ENCODE measurements at regions of chr7 and their contacts with region 1.

Region 1: GRCh38 chr7:100456558-100456957 is 7.5 kb downstream of the SPACDR start:
- DNase-seq: no peak
- H3K4me3 ChIP-seq: no peak overlapping the region
- H3K27ac ChIP-seq: no peak overlapping the region
- H3K4me1 ChIP-seq: peaks cover 4 to 24% (median 20%) of the 10 kb centered on the region in 4 experiments
- H3K27me3 ChIP-seq: no peaks in the 10 kb centered on the region

Region 2: GRCh38 chr7:100393233-100393905 is 63.2 kb before region 1 on chr7:
- CTCF ChIA-PET with region 1: no interaction called
- POLR2A ChIA-PET with region 1: no interaction called
- DNase-seq: no peak
- H3K4me3 ChIP-seq: no peak overlapping the region
- H3K27ac ChIP-seq: no peak overlapping the region
- H3K4me1 ChIP-seq: peaks cover 0 to 4% (median 0%) of the 10 kb centered on the region in 4 experiments
- H3K27me3 ChIP-seq: no peaks in the 10 kb centered on the region

Region 3: GRCh38 chr7:100428199-100428966 is 28.2 kb before region 1 on chr7 and contains the start of gene ZCWPW1:
- CTCF ChIA-PET with region 1: interaction called, 160 read pairs
- POLR2A ChIA-PET with region 1: interaction called, 24 read pairs
- DNase-seq: peak; percentile 98 to 99 (median 98)
- H3K4me3 ChIP-seq: peak within 1 kb of the TSS; percentile 81 to 91 (median 82)
- H3K27ac ChIP-seq: peak within 1 kb of the TSS; percentile 99 to 100
- H3K4me1 ChIP-seq: peaks cover 4 to 32% (median 29%) of the 10 kb centered on the region in 4 experiments
- H3K27me3 ChIP-seq: no peaks in the 10 kb centered on the region

Region 4: DNA sequence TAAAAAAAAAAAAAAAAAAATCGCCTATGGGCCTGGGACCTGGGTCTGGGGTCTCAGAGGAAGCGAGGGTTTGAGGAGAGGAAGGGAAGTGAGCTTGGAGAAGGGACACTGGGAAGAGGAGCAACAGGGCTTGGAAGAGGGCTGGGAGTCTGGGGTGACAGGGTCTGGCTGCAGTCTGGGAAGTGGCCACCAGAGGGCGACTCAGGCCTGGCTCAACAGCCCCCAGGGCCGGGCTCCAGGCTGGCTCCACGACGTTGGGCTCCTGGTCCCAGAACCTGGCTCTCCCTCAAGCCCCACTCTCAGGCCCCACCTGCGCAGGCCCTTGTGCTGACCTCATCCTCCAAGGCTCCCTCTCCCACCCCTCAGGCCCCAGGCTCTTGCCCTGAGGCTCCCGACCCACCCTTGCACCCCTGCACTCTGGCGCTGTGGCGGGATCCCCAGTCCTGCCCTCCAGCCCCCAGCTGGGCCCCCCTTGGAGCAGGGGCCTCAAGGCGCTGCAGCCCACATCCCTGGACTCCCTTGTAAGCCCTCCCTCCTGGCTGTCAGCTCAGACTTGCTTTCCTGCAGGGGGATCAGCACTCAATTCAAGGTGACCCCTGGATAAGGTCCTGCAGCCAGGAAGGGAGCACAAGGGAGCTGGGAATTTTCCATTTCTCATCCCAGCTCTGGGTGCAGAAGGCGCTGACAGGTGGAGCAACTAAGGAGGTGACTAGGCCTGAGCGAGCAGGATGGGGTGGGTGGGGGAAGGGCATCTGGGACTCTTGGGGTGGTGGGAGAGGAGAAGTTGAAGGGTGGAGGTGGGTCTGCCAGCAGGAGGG is 12.9 kb after region 1 on chr7:
- CTCF ChIA-PET with region 1: interaction called, 19 read pairs
- POLR2A ChIA-PET with region 1: no interaction called
- DNase-seq: peak; percentile 66 to 78 (median 71)
- H3K4me3 ChIP-seq: no peak overlapping the region
- H3K27ac ChIP-seq: no peak overlapping the region
- H3K4me1 ChIP-seq: peaks cover 0 to 26% (median 22%) of the 10 kb centered on the region in 4 experiments
- H3K27me3 ChIP-seq: no peaks in the 10 kb centered on the region

Measured in common myeloid progenitor, CD34-positive (primary cell).